ENCODE measurements at regions of chr16 and their contacts with region 1.

Region 1: GRCh38 chr16:11218604-11218962 is 37.4 kb downstream of the SOCS1 start:
- DNase-seq: no peak
- ATAC-seq: no peak
- H3K4me3 Mint-ChIP-seq: no peak overlapping the region
- H3K27ac Mint-ChIP-seq: no peak overlapping the region
- H3K4me1 Mint-ChIP-seq: peaks cover 28% of the 10 kb centered on the region
- H3K27me3 Mint-ChIP-seq: no peaks in the 10 kb centered on the region
- CTCF ChIP-seq: peak; percentile 98

Region 2: DNA sequence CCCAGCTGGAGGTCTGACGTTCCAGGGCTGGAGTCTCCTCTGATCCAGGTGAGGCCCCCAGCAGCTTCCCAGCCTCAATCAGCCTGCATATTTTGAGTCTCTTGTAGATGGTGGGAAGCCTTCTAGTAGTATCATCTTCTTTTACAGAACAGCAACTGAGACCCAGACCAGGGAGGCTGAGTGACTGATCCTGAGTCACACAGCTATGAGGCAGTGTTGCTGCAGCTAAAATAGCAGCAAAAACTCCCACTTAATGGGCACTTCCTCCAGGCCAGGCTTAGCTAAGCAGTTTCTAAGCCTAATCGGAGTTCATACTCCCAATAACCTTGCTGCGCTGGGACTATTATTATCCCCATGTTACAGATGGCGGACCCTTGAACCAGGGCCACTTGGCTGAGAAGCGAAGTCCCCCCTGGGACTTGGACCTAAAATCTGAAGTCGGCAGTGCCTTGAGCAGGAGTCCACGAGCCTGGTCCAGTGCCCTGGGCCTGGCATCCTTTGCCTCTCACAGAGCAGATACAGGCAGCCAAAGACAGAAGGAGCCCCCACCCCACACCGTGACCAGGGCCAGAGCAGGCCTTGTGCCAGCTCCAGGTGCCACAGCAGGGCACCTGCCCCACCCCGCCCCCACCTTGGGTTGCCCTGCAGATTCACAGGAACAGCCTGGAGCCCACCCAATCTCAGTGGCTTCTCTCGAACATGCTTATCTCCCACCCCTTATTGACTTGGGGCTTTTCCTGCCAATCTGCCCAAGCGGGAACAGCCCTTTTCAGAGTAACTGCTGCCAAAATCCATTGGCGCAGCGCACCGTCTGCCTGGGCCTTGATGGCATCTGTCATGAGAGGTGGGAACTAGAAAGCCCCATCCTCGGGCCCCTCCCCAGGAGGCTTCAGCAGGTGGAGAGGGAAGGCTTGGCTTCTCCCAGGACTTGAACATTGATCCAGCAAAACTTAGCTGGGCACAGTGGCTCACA is 27.7 kb before region 1 on chr16:
- CTCF ChIA-PET with region 1: interaction called, 12 read pairs
- POLR2A ChIA-PET with region 1: no interaction called
- intact Hi-C with region 1: no loop called
- DNase-seq: no peak
- ATAC-seq: peak; percentile 86
- H3K4me3 Mint-ChIP-seq: no peak overlapping the region
- H3K27ac Mint-ChIP-seq: peak overlapping the region; percentile 38
- H3K4me1 Mint-ChIP-seq: peaks cover 19% of the 10 kb centered on the region
- H3K27me3 Mint-ChIP-seq: no peaks in the 10 kb centered on the region
- CTCF ChIP-seq: no peak

Region 3: DNA sequence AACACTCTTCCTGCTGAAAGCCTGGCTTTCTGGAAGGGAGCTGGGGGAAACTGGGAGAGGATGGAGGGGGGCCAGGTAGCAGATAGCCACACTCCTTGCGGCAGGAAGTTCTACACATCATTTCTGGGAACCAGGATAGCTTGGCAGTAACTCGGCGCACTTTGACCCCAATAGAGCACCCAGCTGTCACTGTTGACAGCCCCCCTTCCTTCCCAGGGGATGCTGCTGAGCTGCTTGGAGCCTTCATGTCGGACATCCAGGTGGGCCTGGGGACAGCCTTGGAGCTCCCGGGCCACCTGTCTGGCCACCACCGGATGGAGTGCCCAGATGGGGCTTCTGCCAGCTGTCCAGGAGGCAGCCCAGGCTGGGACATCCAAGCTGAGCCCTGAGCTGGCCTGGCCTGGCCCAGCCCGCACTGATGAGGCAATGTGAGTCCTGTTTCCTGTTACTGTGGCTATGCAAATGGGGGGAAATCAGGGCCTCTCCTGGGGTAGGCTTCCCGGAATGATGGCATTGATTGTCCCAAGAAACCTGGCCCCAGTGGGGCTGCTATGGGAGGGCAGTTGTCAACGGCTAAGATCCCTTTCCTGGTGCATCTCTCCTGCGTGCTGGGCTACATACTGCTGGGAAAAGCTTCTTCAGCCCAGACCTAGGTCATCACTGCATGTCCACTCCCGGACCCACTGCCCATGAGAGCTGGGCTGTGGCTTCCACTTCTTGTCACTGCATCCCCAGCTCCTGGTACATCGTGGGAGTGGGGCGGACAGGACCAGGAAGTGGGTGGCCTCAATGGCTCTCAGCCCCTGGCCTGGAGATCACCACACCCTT is 12.6 kb before region 1 on chr16:
- CTCF ChIA-PET with region 1: interaction called, 50 read pairs
- POLR2A ChIA-PET with region 1: interaction called, 8 read pairs
- intact Hi-C with region 1: no loop called
- DNase-seq: no peak
- ATAC-seq: no peak
- H3K4me3 Mint-ChIP-seq: no peak overlapping the region
- H3K27ac Mint-ChIP-seq: peak overlapping the region; percentile 92
- H3K4me1 Mint-ChIP-seq: peaks cover 55% of the 10 kb centered on the region
- H3K27me3 Mint-ChIP-seq: peaks cover 1% of the 10 kb centered on the region
- CTCF ChIP-seq: no peak

Measured in activated CD8-positive, alpha-beta T cell treated with anti-CD3 and anti-CD28 coated beads for 36 hours (primary cell).